Mammary epithelial cell (primary cell): ENCODE measurements at regions of chr1 and their contacts with region 1.

Region 1: DNA sequence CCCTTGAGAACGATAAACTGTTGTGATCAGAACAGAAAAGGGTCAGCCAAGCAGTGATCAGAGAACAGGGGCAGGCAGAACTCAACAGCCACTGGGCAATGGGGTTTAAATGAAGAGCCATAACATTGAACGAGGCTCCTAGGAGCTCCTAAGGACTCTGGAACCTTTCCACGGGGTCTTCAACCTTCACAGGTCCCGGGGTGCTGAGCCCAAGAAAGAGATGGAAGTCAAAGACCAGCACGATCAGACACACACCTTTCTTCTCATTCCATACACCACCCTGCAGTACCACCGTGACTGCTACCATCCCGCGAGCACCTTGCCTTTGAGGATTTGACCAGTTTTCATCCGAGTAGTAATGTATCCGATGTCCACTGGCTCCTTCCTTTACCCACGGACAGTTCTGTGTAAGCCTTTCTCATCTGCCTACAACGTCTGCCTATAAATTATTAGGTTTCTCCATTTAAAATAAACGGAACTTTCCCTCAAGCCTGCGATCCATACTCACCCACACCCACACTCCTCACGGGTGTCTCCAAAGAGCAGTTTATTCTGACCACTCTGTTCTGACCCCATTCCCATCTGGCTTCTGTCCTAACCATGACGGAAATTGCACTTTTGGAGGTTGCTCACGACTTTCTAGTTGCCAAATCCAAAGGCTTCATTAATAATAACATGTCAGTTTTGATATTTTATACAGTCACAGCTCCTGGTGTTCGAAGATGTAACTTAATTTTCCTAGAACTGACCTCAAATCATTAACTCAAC is 16.8 kb upstream of the HHAT start:
- DNase-seq: no peak
- H3K4me3 ChIP-seq: no peak overlapping the region
- H3K27ac ChIP-seq: no peak overlapping the region
- H3K4me1 ChIP-seq: peaks cover 5% of the 10 kb centered on the region
- H3K27me3 ChIP-seq: no peaks in the 10 kb centered on the region
- CTCF ChIP-seq: no peak

Region 2: DNA sequence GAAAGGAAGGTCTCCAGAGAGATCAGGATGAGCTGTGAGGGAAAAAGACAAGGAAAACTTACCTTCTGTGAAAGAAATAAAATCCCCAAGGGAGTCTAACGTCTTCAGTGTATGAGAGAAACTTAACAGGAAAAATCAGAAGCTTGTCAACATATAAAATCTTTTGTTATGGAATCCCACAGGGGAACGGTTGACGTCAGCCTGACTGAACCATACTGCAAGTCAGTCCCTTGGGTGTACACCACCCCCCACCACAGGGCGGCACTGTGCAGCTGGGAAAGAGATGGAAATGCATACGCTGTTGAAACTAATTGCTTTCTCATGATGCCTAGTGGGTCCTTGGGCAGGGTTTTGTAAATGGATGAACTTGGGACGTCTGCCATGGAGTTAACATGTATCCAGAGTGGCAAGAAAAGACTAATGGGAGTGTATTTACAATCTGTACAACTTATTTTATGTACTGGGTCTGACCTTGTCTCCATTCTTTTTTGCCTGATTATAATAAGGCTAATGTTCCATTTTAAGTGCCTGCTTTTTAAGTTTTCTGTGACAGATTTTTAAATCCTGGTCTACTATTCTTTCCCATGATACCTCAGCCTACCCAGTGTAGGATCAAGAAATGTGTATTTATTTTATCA is 461.4 kb before region 1 on chr1:
- CTCF ChIA-PET with region 1: no interaction called
- dilution Hi-C with region 1: no loop called
- in situ Hi-C with region 1: loop called in 1 of 2 experiments (anchors 25 kb)
- intact Hi-C with region 1: loop called (anchors 2 kb)
- DNase-seq: peak; percentile 81
- H3K4me3 ChIP-seq: no peak overlapping the region
- H3K27ac ChIP-seq: no peak overlapping the region
- H3K4me1 ChIP-seq: no peaks in the 10 kb centered on the region
- H3K27me3 ChIP-seq: no peaks in the 10 kb centered on the region
- CTCF ChIP-seq: peak; percentile 84 to 96

Region 3: GRCh38 chr1:209989525-209989924 is 322.4 kb before region 1 on chr1:
- CTCF ChIA-PET with region 1: interaction called, 9 read pairs
- dilution Hi-C with region 1: no loop called
- in situ Hi-C with region 1: no loop called
- intact Hi-C with region 1: loop called (anchors 5 kb)
- DNase-seq: peak; percentile 11
- H3K4me3 ChIP-seq: no peak overlapping the region
- H3K27ac ChIP-seq: no peak overlapping the region
- H3K4me1 ChIP-seq: peaks cover 5% of the 10 kb centered on the region
- H3K27me3 ChIP-seq: no peaks in the 10 kb centered on the region
- CTCF ChIP-seq: peak; percentile 18 to 34

Region 4: GRCh38 chr1:210200124-210200736 is 111.7 kb before region 1 on chr1:
- CTCF ChIA-PET with region 1: interaction called, 3 read pairs
- dilution Hi-C with region 1: no loop called
- in situ Hi-C with region 1: no loop called
- intact Hi-C with region 1: loop called (anchors 1 kb)
- DNase-seq: no peak
- H3K4me3 ChIP-seq: no peak overlapping the region
- H3K27ac ChIP-seq: no peak overlapping the region
- H3K4me1 ChIP-seq: no peaks in the 10 kb centered on the region
- H3K27me3 ChIP-seq: no peaks in the 10 kb centered on the region
- CTCF ChIP-seq: peak in 1 of 2 donors; percentile 33

Region 5: DNA sequence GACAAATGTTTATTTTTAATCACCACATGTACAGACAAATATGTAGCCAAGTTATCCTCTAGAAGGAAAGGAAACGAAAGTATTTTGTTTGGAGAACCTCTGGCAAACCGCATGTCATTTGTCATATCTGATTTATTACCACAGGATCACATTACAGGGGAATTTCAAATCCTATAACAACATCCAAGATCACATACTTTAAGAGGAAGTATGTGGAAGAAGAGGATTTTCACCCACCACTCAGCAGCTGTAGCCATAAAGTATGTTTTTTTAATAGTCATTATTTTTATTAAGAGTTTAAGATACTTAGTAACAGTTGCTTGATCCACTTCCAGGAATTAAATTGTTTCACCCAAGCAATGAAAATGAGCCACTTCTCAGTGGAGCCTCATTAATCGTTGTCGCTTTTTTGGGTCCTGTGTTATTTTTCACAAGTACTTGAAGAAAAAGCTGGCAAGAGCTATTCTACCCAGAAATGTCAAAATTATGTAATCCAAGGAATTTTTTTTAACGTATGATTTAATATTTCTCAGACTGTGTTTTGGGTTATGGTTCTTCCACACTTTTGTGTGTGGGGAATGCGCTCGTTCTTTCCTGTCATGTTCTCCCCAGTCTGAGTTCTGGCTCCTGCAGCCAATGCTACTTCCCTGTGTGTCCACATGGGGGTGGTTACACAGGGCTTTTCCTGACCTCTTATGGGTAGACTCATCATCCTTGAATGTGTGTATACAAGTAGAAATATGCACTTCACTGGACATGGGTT is 72.4 kb before region 1 on chr1:
- CTCF ChIA-PET with region 1: interaction called, 6 read pairs
- dilution Hi-C with region 1: no loop called
- in situ Hi-C with region 1: no loop called
- intact Hi-C with region 1: loop called (anchors 1 kb)
- DNase-seq: peak; percentile 76
- H3K4me3 ChIP-seq: no peak overlapping the region
- H3K27ac ChIP-seq: no peak overlapping the region
- H3K4me1 ChIP-seq: peaks cover 12% of the 10 kb centered on the region
- H3K27me3 ChIP-seq: no peaks in the 10 kb centered on the region
- CTCF ChIP-seq: peak; percentile 58 to 67

Region 6: GRCh38 chr1:210797422-210797821 is 485.5 kb after region 1 on chr1:
- CTCF ChIA-PET with region 1: interaction called, 11 read pairs
- dilution Hi-C with region 1: no loop called
- in situ Hi-C with region 1: no loop called
- intact Hi-C with region 1: no loop called
- DNase-seq: no peak
- H3K4me3 ChIP-seq: no peak overlapping the region
- H3K27ac ChIP-seq: no peak overlapping the region
- H3K4me1 ChIP-seq: no peaks in the 10 kb centered on the region
- H3K27me3 ChIP-seq: no peaks in the 10 kb centered on the region
- CTCF ChIP-seq: no peak